Right cardiac atrium (tissue), 5 donors: ENCODE measurements at regions of chr1 and their contacts with region 1.

Region 1: GRCh38 chr1:25608488-25609178 is 8.0 kb upstream of the MAN1C1 start:
- DNase-seq: peak; percentile 85 to 96 (median 92)
- ATAC-seq: peak; percentile 84 to 87
- H3K4me3 ChIP-seq: no peak overlapping the region
- H3K27ac ChIP-seq: no peak overlapping the region
- H3K4me1 ChIP-seq: no peaks in the 10 kb centered on the region
- H3K27me3 ChIP-seq: no peaks in the 10 kb centered on the region

Region 2: GRCh38 chr1:25796811-25797458 is 188.3 kb after region 1 on chr1:
- intact Hi-C with region 1: loop called in 2 of 4 experiments (anchors 2 kb)
- DNase-seq: peak; percentile 85 to 96 (median 93)
- ATAC-seq: peak in 1 of 2 donors; percentile 32
- H3K4me3 ChIP-seq: no peak overlapping the region
- H3K27ac ChIP-seq: no peak overlapping the region
- H3K4me1 ChIP-seq: peaks cover 6% of the 10 kb centered on the region
- H3K27me3 ChIP-seq: no peaks in the 10 kb centered on the region